Mammary epithelial cell (primary cell): ENCODE measurements at regions of chr5 and their contacts with region 1.

Region 1: DNA sequence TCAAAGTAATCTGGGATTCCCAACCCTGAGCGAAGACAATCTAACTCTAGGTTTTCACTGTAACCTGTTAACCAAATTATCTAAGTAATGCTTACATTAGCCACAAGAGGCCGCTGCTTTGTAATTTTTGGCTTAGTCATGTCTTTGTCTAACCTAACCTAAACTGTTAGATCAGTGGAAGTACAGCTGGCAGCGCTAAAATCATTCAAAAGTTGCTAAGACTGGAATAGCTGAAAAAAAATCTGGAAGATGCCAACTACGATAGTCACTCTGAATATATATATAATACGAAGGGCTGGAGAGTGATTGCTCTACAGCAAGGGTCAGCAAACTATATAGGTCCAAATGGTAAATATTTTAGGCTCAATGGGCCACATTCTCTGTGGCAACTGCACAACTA is 60.2 kb downstream of the FBXO38 start:
- DNase-seq: peak; percentile 46
- H3K4me3 ChIP-seq: no peak overlapping the region
- H3K27ac ChIP-seq: no peak overlapping the region
- H3K4me1 ChIP-seq: no peaks in the 10 kb centered on the region
- H3K27me3 ChIP-seq: no peaks in the 10 kb centered on the region
- CTCF ChIP-seq: peak; percentile 67 to 68

Region 2: GRCh38 chr5:148179234-148179824 is 264.7 kb before region 1 on chr5:
- CTCF ChIA-PET with region 1: no interaction called
- dilution Hi-C with region 1: no loop called
- in situ Hi-C with region 1: no loop called
- intact Hi-C with region 1: loop called (anchors 10 kb)
- DNase-seq: peak; percentile 59
- H3K4me3 ChIP-seq: no peak overlapping the region
- H3K27ac ChIP-seq: no peak overlapping the region
- H3K4me1 ChIP-seq: no peaks in the 10 kb centered on the region
- H3K27me3 ChIP-seq: no peaks in the 10 kb centered on the region
- CTCF ChIP-seq: peak; percentile 76 to 79

Region 3: DNA sequence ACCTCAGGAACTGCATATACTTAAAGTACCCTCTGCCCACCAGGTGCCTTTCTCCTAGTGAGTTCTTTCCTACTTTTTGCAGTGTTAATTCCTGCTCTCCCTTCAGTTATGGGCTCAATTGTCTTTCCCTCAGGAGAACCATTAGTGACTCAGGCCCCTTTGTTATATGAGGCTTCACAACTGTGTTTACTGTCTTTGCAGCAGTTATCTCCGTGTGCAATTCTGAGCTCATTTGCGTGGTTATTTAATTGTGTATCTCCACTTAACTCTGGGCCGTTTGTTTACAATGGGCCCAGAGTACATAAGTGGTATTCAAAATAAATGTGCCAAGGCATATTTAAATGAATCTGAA is 50.6 kb before region 1 on chr5:
- CTCF ChIA-PET with region 1: no interaction called
- dilution Hi-C with region 1: loop called (anchors 5 kb)
- in situ Hi-C with region 1: no loop called
- intact Hi-C with region 1: no loop called
- DNase-seq: no peak
- H3K4me3 ChIP-seq: no peak overlapping the region
- H3K27ac ChIP-seq: no peak overlapping the region
- H3K4me1 ChIP-seq: no peaks in the 10 kb centered on the region
- H3K27me3 ChIP-seq: no peaks in the 10 kb centered on the region
- CTCF ChIP-seq: no peak

Region 4: GRCh38 chr5:148585988-148586387 is 142.0 kb after region 1 on chr5:
- CTCF ChIA-PET with region 1: no interaction called
- dilution Hi-C with region 1: no loop called
- in situ Hi-C with region 1: no loop called
- intact Hi-C with region 1: loop called (anchors 10 kb)
- DNase-seq: no peak
- H3K4me3 ChIP-seq: no peak overlapping the region
- H3K27ac ChIP-seq: no peak overlapping the region
- H3K4me1 ChIP-seq: no peaks in the 10 kb centered on the region
- H3K27me3 ChIP-seq: no peaks in the 10 kb centered on the region
- CTCF ChIP-seq: peak in 1 of 2 donors; percentile 37

Region 5: GRCh38 chr5:148730943-148731861 is 287.2 kb after region 1 on chr5:
- CTCF ChIA-PET with region 1: no interaction called
- dilution Hi-C with region 1: no loop called
- in situ Hi-C with region 1: loop called (anchors 5 kb)
- intact Hi-C with region 1: loop called (anchors 1 kb)
- DNase-seq: peak; percentile 64
- H3K4me3 ChIP-seq: peak overlapping the region in 1 of 3 experiments; percentile 4
- H3K27ac ChIP-seq: no peak overlapping the region
- H3K4me1 ChIP-seq: peaks cover 6% of the 10 kb centered on the region
- H3K27me3 ChIP-seq: no peaks in the 10 kb centered on the region
- CTCF ChIP-seq: peak; percentile 76 to 98

Region 6: GRCh38 chr5:149228618-149229297 is 784.8 kb after region 1 on chr5:
- CTCF ChIA-PET with region 1: no interaction called
- dilution Hi-C with region 1: no loop called
- in situ Hi-C with region 1: loop called in 1 of 2 experiments (anchors 25 kb)
- intact Hi-C with region 1: no loop called
- DNase-seq: peak; percentile 76
- H3K4me3 ChIP-seq: no peak overlapping the region
- H3K27ac ChIP-seq: no peak overlapping the region
- H3K4me1 ChIP-seq: peaks cover 21% of the 10 kb centered on the region
- H3K27me3 ChIP-seq: no peaks in the 10 kb centered on the region
- CTCF ChIP-seq: peak; percentile 73 to 85

Region 7: DNA sequence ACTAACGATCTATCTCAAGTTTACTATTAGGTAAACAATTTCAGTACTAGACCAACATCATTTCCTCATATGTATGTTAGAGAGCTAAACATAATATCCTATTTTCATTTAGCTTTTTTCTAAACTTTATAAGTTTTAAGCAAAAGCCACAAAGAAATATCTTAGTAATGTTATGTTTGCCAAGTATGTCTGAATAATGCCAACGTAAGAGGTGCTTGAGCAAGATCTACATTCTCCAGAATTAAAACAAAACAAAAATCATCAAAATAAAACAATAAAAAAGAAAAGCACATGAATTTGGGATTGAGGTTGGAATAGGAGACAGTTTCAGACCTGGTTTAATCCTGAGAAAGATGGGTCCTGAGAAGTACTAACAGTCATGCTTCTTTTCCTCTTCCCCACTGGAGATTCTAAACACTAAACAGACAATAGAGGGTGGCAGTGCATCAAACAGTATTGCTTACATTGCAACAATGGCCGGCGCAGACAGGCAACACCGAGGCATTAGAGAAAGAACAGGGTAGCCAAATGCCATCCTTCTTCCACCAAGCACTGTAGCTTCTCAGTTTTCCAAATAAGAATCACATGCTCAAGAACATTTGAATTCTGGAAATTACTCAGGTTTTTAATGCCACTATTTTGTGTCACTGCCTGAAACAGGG is 1073.6 kb after region 1 on chr5:
- CTCF ChIA-PET with region 1: no interaction called
- dilution Hi-C with region 1: no loop called
- in situ Hi-C with region 1: no loop called
- intact Hi-C with region 1: no loop called
- DNase-seq: no peak
- H3K4me3 ChIP-seq: no peak overlapping the region
- H3K27ac ChIP-seq: no peak overlapping the region
- H3K4me1 ChIP-seq: peaks cover 3% of the 10 kb centered on the region
- H3K27me3 ChIP-seq: no peaks in the 10 kb centered on the region
- CTCF ChIP-seq: no peak